ENCODE measurements at regions of chr16 and their contacts with region 1.

Region 1: DNA sequence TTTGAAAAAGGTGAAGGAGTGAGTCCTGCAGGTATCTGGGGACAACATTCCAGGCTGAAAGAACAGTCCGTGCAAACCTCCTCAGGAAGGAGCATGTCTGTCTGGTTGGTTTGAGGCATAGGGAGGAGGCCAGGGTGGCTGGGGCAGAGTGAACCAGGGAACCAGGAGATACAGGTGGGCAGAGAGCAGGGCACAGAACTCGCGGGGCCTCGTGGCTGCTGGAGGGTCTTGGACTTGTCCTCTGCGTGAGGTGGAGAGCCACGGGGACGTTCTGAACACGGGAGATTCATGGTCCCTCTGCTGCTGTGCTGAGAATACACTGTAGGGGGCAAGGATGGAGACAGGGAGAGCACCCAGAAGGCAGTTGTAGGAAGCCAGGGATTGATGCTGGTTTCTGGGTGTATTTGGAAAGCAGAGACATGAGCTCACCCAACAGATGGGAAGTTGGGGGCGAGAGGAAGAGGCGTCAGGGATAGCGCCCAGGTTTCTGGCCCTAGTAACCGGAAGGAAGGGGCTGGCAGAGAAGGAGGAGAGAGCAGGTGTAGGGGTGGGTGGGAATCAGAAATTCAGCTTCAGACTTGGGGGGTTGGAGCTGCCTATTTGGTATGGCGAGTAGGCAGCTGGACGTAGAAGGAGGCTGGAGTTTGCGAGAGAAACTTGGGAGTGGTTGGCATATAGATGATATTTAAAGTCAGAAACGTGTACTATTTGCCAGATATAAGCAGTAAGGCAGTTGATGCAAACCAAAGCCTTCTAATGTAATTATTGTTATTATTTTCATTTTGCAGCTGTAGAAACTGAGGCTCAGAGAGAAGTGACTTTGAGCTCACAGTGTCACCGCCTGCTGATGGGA is at the start of gene CCL17:
- DNase-seq: no peak
- ATAC-seq: no peak
- H3K4me3 Mint-ChIP-seq: no peak within 1 kb of the TSS
- H3K27ac Mint-ChIP-seq: no peak within 1 kb of the TSS
- H3K4me1 Mint-ChIP-seq: peaks cover 33% of the 10 kb centered on the region
- H3K27me3 Mint-ChIP-seq: no peaks in the 10 kb centered on the region
- CTCF ChIP-seq: no peak
- total RNA-seq, gene CCL17: 6.7 and 7.0 TPM in 2 replicates

Region 2: DNA sequence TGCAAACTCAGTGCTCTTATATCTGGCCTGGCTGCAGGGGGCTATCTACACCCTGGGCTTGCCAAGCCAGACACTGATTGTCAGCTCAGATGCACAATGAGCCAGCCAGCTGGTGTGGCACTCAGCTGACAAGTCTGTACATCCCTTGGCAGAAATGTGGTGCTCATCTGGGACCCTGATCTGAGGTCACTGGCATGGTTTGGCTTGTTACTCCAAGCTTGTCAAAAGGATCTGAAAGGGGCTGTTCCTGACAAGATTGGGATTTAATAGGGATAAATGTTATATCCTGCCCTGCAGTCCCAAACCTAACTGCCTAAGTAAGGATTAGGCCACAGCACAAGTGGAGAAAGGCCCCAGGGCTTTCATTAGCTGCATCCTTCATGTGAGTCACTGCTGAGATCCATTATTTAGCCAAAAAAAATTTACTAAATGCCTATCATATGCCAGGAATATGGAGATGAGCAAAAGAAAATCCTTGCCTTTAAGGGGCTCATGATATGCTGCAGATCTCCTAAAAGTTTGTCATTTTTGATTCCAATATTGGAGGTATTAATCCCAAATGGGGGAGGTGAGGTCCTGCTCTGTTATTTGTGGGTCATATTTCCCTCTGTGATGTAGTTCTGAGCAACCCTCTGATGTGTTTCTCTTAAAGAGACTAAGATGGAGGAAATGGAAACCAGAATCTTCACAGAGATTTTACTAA is 1742.1 kb before region 1 on chr16:
- CTCF ChIA-PET with region 1: no interaction called
- POLR2A ChIA-PET with region 1: no interaction called
- intact Hi-C with region 1: no loop called
- DNase-seq: no peak
- ATAC-seq: no peak
- H3K4me3 Mint-ChIP-seq: no peak overlapping the region
- H3K27ac Mint-ChIP-seq: no peak overlapping the region
- H3K4me1 Mint-ChIP-seq: no peaks in the 10 kb centered on the region
- H3K27me3 Mint-ChIP-seq: peaks cover 4% of the 10 kb centered on the region
- CTCF ChIP-seq: no peak

Region 3: DNA sequence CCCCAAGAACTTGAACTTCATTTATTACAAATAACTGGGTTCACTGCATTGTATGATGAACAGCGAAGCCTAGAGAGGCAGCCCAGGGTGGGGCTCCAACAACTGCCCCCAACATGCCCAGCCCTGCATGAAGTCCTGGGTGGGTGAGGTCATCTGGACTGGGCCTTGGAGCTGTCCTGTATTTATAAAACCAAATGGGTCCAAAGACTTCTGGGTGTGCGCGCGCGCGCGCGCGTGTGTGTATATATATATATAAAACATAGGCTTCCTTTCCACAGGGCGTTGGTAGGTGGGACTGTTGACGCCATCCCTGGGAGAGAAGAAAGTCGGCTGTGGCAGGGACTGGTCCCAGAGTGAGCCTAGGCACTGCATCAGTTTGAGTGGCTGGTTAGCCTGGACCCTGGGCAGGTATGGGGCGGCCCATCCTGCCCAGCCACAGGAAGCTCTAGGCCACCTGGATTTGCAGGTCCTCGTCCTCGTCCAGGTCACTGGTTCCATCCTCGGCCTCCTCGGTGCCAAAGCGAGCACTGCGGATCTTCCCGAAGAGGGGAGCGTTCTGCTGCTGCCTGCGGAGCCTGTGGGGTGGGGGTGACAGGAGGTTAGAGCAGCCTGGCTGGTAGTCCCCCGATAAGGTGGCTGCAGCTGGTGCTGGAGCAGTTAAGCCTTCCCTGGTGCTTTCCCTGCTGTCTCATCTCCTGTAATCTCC is 108.3 kb after region 1 on chr16:
- CTCF ChIA-PET with region 1: no interaction called
- POLR2A ChIA-PET with region 1: interaction called, 10 read pairs
- intact Hi-C with region 1: no loop called
- DNase-seq: no peak
- ATAC-seq: no peak
- H3K4me3 Mint-ChIP-seq: no peak overlapping the region
- H3K27ac Mint-ChIP-seq: no peak overlapping the region
- H3K4me1 Mint-ChIP-seq: no peaks in the 10 kb centered on the region
- H3K27me3 Mint-ChIP-seq: peaks cover 3% of the 10 kb centered on the region
- CTCF ChIP-seq: no peak